PC-3 (cell line): ENCODE measurements at regions of chr12 and their contacts with region 1.

Region 1: DNA sequence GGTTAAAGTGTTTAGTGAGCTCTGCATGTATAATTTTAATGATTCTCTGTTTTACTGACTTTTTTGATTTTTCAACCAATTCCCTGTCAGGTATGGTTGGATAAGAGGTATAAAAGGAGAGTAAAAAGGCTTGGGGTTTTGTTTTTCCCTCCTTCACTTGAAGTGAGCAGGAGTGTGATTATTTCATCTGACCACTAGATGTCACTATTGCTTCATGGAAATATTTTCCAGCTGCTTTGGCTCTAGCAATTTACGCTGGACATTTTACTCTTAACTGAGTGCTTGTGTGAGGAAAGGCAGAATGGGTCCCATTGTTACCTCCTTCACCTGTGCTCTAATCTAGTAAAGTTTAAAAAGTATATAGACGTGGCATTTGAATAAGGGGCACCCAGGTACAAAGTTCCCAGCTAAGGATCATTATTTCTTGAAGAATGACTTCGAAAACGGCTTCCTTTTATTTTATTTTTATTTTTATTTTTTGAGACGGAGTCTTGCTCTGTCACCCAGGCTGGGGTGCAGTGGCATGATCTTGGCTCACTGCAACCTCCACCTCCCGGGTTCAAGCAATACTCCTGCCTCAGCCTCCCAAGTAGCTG is 66.5 kb downstream of the TBC1D30 start:
- DNase-seq: peak; percentile 88
- ATAC-seq: peak; percentile 16
- H3K4me3 ChIP-seq: no peak overlapping the region
- H3K27ac ChIP-seq: no peak overlapping the region
- H3K4me1 ChIP-seq: peaks cover 51% of the 10 kb centered on the region
- H3K27me3 ChIP-seq: no peaks in the 10 kb centered on the region
- CTCF ChIP-seq: peak; percentile 82

Region 2: DNA sequence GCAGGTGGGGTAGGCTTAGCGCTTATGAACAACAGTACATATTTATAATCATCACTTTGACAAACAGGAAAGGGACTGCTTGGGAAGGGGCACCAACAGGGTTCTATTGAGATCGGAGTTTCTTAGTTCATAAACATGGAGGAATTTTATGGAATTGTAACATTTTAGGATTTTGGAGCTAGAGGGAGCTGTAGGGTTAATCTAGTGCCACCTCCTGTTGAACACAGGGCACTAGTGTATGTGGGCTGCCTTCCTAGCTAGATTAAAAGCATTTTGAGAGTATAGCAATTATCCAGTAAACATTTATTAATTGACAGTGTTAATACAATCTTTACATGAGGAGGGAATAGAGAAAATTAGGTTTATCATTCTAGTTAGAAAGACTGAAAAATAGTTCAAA is 89.6 kb before region 1 on chr12:
- CTCF ChIA-PET with region 1: interaction called, 17 read pairs
- POLR2A ChIA-PET with region 1: interaction called, 6 read pairs
- intact Hi-C with region 1: loop called (anchors 1 kb)
- DNase-seq: peak; percentile 68
- ATAC-seq: peak; percentile 55
- H3K4me3 ChIP-seq: no peak overlapping the region
- H3K27ac ChIP-seq: no peak overlapping the region
- H3K4me1 ChIP-seq: peaks cover 23% of the 10 kb centered on the region
- H3K27me3 ChIP-seq: no peaks in the 10 kb centered on the region
- CTCF ChIP-seq: peak; percentile 77

Region 3: DNA sequence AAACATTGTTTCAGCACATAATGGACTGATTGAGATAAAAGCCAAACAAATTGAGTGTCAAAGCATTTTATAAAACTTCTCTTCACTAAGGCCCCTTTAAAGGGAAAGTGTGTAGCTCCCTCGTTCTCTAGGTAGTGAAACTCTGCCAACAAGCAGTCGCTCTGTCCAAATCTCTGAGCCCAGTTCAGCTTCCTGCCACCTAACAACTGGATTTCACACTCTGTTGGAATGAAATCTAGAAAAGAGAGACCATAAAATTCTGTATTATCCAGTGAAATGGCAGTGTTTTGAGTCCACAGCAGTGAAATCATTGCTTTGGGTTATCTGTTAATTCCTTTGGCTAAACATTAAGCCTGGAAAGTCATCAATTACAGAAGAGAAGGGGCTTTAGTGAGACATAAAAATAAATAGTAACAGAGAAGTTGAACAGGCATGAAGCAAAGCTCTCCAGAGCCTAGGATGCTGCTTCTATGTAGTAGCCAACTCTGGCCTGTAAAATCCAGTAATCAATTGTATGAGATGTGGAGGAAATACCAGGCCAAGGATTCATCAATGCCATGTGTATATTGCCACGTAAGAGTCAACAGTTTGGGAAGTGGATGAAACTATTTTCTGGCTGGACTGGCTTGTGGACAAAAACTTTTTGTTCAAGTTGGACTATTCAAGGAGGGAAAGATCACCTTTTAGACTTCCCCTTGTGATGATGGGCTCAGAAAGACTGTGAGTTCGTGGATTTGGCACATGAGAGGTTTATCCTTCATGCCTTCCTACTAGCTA is 107.6 kb after region 1 on chr12:
- CTCF ChIA-PET with region 1: no interaction called
- POLR2A ChIA-PET with region 1: no interaction called
- intact Hi-C with region 1: loop called (anchors 2 kb)
- DNase-seq: peak; percentile 93
- ATAC-seq: peak; percentile 90
- H3K4me3 ChIP-seq: no peak overlapping the region
- H3K27ac ChIP-seq: peak overlapping the region; percentile 81
- H3K4me1 ChIP-seq: peaks cover 36% of the 10 kb centered on the region
- H3K27me3 ChIP-seq: no peaks in the 10 kb centered on the region
- CTCF ChIP-seq: no peak

Region 4: GRCh38 chr12:65106948-65107347 is 216.0 kb after region 1 on chr12:
- CTCF ChIA-PET with region 1: interaction called, 5 read pairs
- POLR2A ChIA-PET with region 1: interaction called, 10 read pairs
- intact Hi-C with region 1: loop called (anchors 1 kb)
- DNase-seq: peak; percentile 56
- ATAC-seq: peak; percentile 18; the same call in 1 of the 2 replicates
- H3K4me3 ChIP-seq: no peak overlapping the region
- H3K27ac ChIP-seq: no peak overlapping the region
- H3K4me1 ChIP-seq: no peaks in the 10 kb centered on the region
- H3K27me3 ChIP-seq: no peaks in the 10 kb centered on the region
- CTCF ChIP-seq: peak; percentile 72

Region 5: GRCh38 chr12:65232476-65233077 is 341.6 kb after region 1 on chr12:
- CTCF ChIA-PET with region 1: interaction called, 5 read pairs
- POLR2A ChIA-PET with region 1: no interaction called
- intact Hi-C with region 1: loop called (anchors 2 kb)
- DNase-seq: peak; percentile 45
- ATAC-seq: no peak
- H3K4me3 ChIP-seq: no peak overlapping the region
- H3K27ac ChIP-seq: no peak overlapping the region
- H3K4me1 ChIP-seq: peaks cover 11% of the 10 kb centered on the region
- H3K27me3 ChIP-seq: no peaks in the 10 kb centered on the region
- CTCF ChIP-seq: peak; percentile 58

Region 6: DNA sequence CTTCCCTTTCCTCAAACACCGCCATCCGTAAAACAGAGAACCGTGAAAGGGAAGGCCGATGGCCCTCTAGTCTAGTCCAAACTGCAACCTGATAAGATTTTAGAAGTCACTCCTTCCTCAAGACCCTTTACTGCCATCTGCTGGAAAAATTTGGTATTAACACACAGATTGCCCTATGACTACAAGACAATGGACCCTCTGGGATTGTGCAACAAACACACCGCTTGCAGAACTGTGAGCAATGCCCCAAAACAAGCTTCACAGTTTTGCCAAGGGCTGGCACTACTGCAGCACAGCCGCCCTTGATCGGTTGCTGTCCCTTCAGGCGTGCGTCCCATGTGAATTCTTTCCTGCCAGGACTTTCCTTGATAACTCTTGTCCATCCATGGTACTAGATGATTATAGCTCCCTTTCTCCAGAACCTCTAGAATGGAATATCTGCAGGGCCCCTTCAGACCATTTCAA is 1216.5 kb after region 1 on chr12:
- CTCF ChIA-PET with region 1: no interaction called
- POLR2A ChIA-PET with region 1: no interaction called
- intact Hi-C with region 1: loop called (anchors 2 kb)
- DNase-seq: peak; percentile 100
- ATAC-seq: peak; percentile 99
- H3K4me3 ChIP-seq: peak overlapping the region; percentile 10; the same call in 1 of the 2 replicates
- H3K27ac ChIP-seq: no peak overlapping the region
- H3K4me1 ChIP-seq: peaks cover 4% of the 10 kb centered on the region; the same call in 1 of the 2 replicates
- H3K27me3 ChIP-seq: no peaks in the 10 kb centered on the region
- CTCF ChIP-seq: peak; percentile 83